Caco-2 (cell line): ENCODE measurements at regions of chr12 and their contacts with region 1.

Region 1: GRCh38 chr12:75334384-75335030 is at the start of gene GLIPR1L1:
- DNase-seq: peak; percentile 81 to 82
- H3K4me3 ChIP-seq: no peak within 1 kb of the TSS
- H3K4me3 Mint-ChIP-seq: peak within 1 kb of the TSS; percentile 52
- H3K27ac Mint-ChIP-seq: no peak within 1 kb of the TSS
- H3K4me1 ChIP-seq: no peaks in the 10 kb centered on the region
- H3K4me1 Mint-ChIP-seq: no peaks in the 10 kb centered on the region
- H3K27me3 ChIP-seq: no peaks in the 10 kb centered on the region
- H3K27me3 Mint-ChIP-seq: no peaks in the 10 kb centered on the region
- CTCF ChIP-seq: peak; percentile 70 to 74
- total RNA-seq, gene GLIPR1L1: not detected in 2 replicates

Region 2: GRCh38 chr12:75270157-75270556 is 64.3 kb before region 1 on chr12:
- CTCF ChIA-PET with region 1: no interaction called
- POLR2A ChIA-PET with region 1: no interaction called
- intact Hi-C with region 1: loop called (anchors 5 kb)
- DNase-seq: peak; percentile 34 to 40
- H3K4me3 ChIP-seq: no peak overlapping the region
- H3K4me3 Mint-ChIP-seq: peak overlapping the region; percentile 16
- H3K27ac Mint-ChIP-seq: peak overlapping the region; percentile 79
- H3K4me1 ChIP-seq: peaks cover 26% of the 10 kb centered on the region
- H3K4me1 Mint-ChIP-seq: peaks cover 28% of the 10 kb centered on the region
- H3K27me3 ChIP-seq: no peaks in the 10 kb centered on the region
- H3K27me3 Mint-ChIP-seq: no peaks in the 10 kb centered on the region
- CTCF ChIP-seq: no peak

Region 3: DNA sequence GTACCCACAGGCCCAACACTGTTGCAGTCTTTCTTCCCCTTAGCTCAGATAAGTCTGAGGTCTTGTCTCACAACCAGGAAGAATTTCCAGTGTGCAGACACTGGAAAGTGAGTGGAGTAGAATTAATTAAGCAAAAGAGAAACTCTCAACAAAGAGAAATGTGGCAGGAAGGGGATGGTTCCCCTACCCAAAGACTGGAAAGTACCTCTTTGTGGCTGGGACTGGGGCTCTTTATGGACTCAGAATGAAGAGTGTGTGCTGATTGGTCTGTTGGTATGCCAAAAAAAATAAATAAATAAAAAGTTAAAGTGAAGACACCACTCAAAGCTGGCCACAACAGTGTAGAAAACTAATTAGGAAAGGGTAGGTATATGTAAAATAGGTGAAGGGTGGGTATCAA is 26.4 kb after region 1 on chr12:
- CTCF ChIA-PET with region 1: no interaction called
- POLR2A ChIA-PET with region 1: no interaction called
- intact Hi-C with region 1: loop called (anchors 1 kb)
- DNase-seq: no peak
- H3K4me3 ChIP-seq: no peak overlapping the region
- H3K4me3 Mint-ChIP-seq: no peak overlapping the region
- H3K27ac Mint-ChIP-seq: no peak overlapping the region
- H3K4me1 ChIP-seq: no peaks in the 10 kb centered on the region
- H3K4me1 Mint-ChIP-seq: no peaks in the 10 kb centered on the region
- H3K27me3 ChIP-seq: no peaks in the 10 kb centered on the region
- H3K27me3 Mint-ChIP-seq: no peaks in the 10 kb centered on the region
- CTCF ChIP-seq: no peak

Region 4: DNA sequence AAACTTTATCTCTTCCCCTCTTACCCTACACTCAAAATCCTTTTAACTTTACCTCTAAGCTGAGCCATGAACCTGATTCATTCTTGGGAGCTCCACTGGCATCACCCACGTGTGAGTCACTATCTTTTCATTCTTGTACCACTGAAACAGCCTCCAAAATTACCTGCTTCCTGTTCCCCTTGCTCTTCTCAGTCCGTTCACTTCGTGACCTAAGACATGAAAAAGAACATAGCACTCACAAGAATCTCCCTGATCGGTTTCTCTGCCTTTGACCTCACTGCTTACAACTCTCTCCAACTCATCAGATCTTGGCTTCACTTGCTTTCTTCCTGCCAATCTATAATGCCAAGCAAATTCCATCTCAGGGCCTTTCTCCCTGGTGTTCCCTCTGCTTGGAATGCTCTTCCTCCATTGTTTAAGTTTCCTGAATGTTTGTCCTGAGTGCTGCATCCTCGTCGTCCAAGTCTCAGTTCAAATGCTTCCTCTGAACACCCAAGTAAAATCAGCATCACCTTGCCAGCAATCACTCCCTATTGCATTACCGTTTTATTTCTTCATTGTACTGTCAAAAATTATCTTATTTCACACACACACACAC is 155.2 kb after region 1 on chr12:
- CTCF ChIA-PET with region 1: interaction called, 3 read pairs
- POLR2A ChIA-PET with region 1: no interaction called
- intact Hi-C with region 1: loop called (anchors 1 kb)
- DNase-seq: no peak
- H3K4me3 ChIP-seq: no peak overlapping the region
- H3K4me3 Mint-ChIP-seq: no peak overlapping the region
- H3K27ac Mint-ChIP-seq: no peak overlapping the region
- H3K4me1 ChIP-seq: no peaks in the 10 kb centered on the region
- H3K4me1 Mint-ChIP-seq: no peaks in the 10 kb centered on the region
- H3K27me3 ChIP-seq: no peaks in the 10 kb centered on the region
- H3K27me3 Mint-ChIP-seq: no peaks in the 10 kb centered on the region
- CTCF ChIP-seq: no peak

Region 5: GRCh38 chr12:75505706-75506312 is 171.3 kb after region 1 on chr12:
- CTCF ChIA-PET with region 1: no interaction called
- POLR2A ChIA-PET with region 1: no interaction called
- intact Hi-C with region 1: loop called (anchors 2 kb)
- DNase-seq: no peak
- H3K4me3 ChIP-seq: no peak overlapping the region
- H3K4me3 Mint-ChIP-seq: no peak overlapping the region
- H3K27ac Mint-ChIP-seq: no peak overlapping the region
- H3K4me1 ChIP-seq: 0 out of 2 replicates have a peak, but pooled peaks cover 3% of the 10 kb centered on the region
- H3K4me1 Mint-ChIP-seq: no peaks in the 10 kb centered on the region
- H3K27me3 ChIP-seq: no peaks in the 10 kb centered on the region
- H3K27me3 Mint-ChIP-seq: no peaks in the 10 kb centered on the region
- CTCF ChIP-seq: peak; percentile 47 to 48